ENCODE measurements at regions of chr3 and their contacts with region 1.

Region 1: GRCh38 chr3:39065197-39065596 is 13.4 kb downstream of the WDR48 start:
- DNase-seq: peak in 1 of 2 experiments; percentile 41
- H3K4me3 ChIP-seq: no peak overlapping the region
- H3K4me3 Mint-ChIP-seq: no peak overlapping the region
- H3K27ac Mint-ChIP-seq: no peak overlapping the region
- H3K4me1 ChIP-seq: no peaks in the 10 kb centered on the region; the same call in 1 of the 2 replicates
- H3K4me1 Mint-ChIP-seq: peaks cover 13% of the 10 kb centered on the region
- H3K27me3 ChIP-seq: no peaks in the 10 kb centered on the region
- H3K27me3 Mint-ChIP-seq: no peaks in the 10 kb centered on the region
- CTCF ChIP-seq: peak; percentile 42 to 59

Region 2: DNA sequence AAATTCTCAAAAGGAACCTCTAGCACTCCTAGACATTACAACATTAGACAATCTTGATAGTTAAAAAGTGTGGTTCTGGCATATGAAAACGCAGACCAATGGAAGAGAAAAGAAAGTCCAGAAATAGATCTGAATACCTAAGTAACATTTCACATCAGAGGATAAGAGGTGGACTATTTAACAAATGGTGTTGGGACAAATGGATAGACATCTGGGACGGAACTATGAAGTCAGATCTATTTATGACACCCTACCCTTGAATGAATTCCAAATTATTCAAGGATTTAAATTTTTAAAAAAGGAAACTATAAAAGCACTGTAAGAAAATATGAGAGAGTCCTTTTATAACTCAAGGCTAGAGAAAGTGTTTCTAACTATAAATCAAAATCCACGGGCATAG is 124.8 kb before region 1 on chr3:
- CTCF ChIA-PET with region 1: no interaction called
- POLR2A ChIA-PET with region 1: no interaction called
- intact Hi-C with region 1: no loop called
- DNase-seq: no peak
- H3K4me3 ChIP-seq: no peak overlapping the region
- H3K4me3 Mint-ChIP-seq: no peak overlapping the region
- H3K27ac Mint-ChIP-seq: no peak overlapping the region
- H3K4me1 ChIP-seq: no peaks in the 10 kb centered on the region
- H3K4me1 Mint-ChIP-seq: no peaks in the 10 kb centered on the region
- H3K27me3 ChIP-seq: no peaks in the 10 kb centered on the region
- H3K27me3 Mint-ChIP-seq: peaks cover 7% of the 10 kb centered on the region
- CTCF ChIP-seq: no peak

Region 3: DNA sequence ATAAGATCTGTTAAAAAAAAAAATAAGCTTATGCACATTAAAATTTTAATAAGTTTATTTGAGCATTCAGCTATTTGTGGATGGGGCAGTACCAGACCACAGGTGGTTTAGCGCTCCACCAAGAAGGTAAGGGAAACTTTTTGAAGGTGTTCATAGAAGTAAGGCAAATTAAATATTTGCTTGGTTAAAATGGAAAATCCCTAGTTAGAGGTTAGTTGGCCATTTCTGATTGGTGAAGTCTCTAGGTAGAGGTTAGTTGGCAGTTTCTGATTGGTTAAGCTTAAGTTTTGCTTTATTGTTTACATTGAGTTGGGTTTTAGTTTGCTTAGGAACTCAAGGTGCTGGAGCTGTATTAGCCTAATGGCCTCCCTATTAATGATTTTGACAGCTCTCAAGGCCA is 44.2 kb before region 1 on chr3:
- CTCF ChIA-PET with region 1: no interaction called
- POLR2A ChIA-PET with region 1: no interaction called
- intact Hi-C with region 1: loop called (anchors 1 kb)
- DNase-seq: no peak
- H3K4me3 ChIP-seq: no peak overlapping the region
- H3K4me3 Mint-ChIP-seq: no peak overlapping the region
- H3K27ac Mint-ChIP-seq: no peak overlapping the region
- H3K4me1 ChIP-seq: peaks cover 10% of the 10 kb centered on the region
- H3K4me1 Mint-ChIP-seq: peaks cover 15% of the 10 kb centered on the region
- H3K27me3 ChIP-seq: no peaks in the 10 kb centered on the region
- H3K27me3 Mint-ChIP-seq: peaks cover 3% of the 10 kb centered on the region
- CTCF ChIP-seq: no peak

Region 4: GRCh38 chr3:39028546-39028945 is 36.7 kb before region 1 on chr3:
- CTCF ChIA-PET with region 1: interaction called, 3 read pairs
- POLR2A ChIA-PET with region 1: no interaction called
- intact Hi-C with region 1: loop called (anchors 1 kb)
- DNase-seq: no peak
- H3K4me3 ChIP-seq: no peak overlapping the region
- H3K4me3 Mint-ChIP-seq: no peak overlapping the region
- H3K27ac Mint-ChIP-seq: no peak overlapping the region
- H3K4me1 ChIP-seq: no peaks in the 10 kb centered on the region; the same call in 1 of the 2 replicates
- H3K4me1 Mint-ChIP-seq: no peaks in the 10 kb centered on the region
- H3K27me3 ChIP-seq: no peaks in the 10 kb centered on the region
- H3K27me3 Mint-ChIP-seq: peaks cover 10% of the 10 kb centered on the region
- CTCF ChIP-seq: no peak

Region 5: GRCh38 chr3:39086144-39086543 is 20.9 kb after region 1 on chr3:
- CTCF ChIA-PET with region 1: no interaction called
- POLR2A ChIA-PET with region 1: no interaction called
- intact Hi-C with region 1: no loop called
- DNase-seq: no peak
- H3K4me3 ChIP-seq: no peak overlapping the region
- H3K4me3 Mint-ChIP-seq: no peak overlapping the region
- H3K27ac Mint-ChIP-seq: no peak overlapping the region
- H3K4me1 ChIP-seq: no peaks in the 10 kb centered on the region
- H3K4me1 Mint-ChIP-seq: no peaks in the 10 kb centered on the region
- H3K27me3 ChIP-seq: no peaks in the 10 kb centered on the region
- H3K27me3 Mint-ChIP-seq: no peaks in the 10 kb centered on the region
- CTCF ChIP-seq: no peak

Measured in Caco-2 (cell line).